ENCODE measurements at regions of chr6 and their contacts with region 1.

Region 1: GRCh38 chr6:38404900-38405556 is 234.7 kb downstream of the BTBD9 start:
- DNase-seq: peak; percentile 87
- H3K4me3 ChIP-seq: peak overlapping the region in 1 of 3 experiments; percentile 17
- H3K27ac ChIP-seq: peak overlapping the region; percentile 72
- H3K4me1 ChIP-seq: peaks cover 22% of the 10 kb centered on the region
- H3K27me3 ChIP-seq: no peaks in the 10 kb centered on the region
- CTCF ChIP-seq: no peak

Region 2: GRCh38 chr6:38337819-38338465 is 67.1 kb before region 1 on chr6:
- CTCF ChIA-PET with region 1: no interaction called
- dilution Hi-C with region 1: no loop called
- in situ Hi-C with region 1: no loop called
- intact Hi-C with region 1: loop called (anchors 1 kb)
- DNase-seq: peak; percentile 52
- H3K4me3 ChIP-seq: no peak overlapping the region
- H3K27ac ChIP-seq: no peak overlapping the region
- H3K4me1 ChIP-seq: no peaks in the 10 kb centered on the region
- H3K27me3 ChIP-seq: no peaks in the 10 kb centered on the region
- CTCF ChIP-seq: peak; percentile 10 to 30